PC-9 (cell line): ENCODE measurements at regions of chr7 and their contacts with region 1.

Region 1: DNA sequence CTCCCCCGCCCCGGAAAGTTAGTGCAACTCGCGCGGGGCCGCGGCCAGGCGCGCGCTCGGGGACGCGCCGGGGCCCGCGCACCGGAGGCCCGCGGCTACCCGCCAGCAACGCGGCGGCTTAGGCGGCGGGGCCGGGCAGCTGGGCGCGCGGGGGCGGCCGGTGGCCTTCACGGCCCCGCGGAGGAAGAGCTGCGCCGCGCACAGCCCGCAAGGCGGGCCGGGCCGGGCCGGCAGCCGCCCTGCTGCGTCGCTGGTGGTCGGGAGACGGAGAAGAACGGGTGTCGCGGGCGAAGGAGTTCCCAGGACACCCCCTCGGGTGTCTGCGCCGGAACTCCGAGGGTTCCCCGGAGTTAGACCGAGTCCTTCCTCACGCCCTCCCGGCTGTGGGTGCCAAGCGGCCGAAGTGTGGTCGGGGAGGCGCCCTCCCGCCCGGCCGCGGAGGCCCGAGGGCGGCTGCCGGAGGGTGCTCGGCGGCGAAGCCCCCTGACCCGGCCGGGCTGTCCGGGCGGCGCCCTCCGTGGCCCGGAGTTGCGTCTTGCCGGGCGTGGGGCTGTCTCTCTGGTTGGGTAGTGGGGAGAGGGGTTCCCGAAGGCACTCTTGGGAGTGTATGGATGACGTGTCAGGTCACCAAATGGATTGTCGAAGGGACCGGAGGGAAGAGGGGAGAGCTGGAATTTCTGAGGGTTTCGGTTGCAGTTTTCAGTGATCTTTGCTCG is 584 bp downstream of the ST7 start:
- DNase-seq: peak; percentile 63 to 65
- H3K4me3 ChIP-seq: peak overlapping the region; percentile 95
- H3K27ac ChIP-seq: peak overlapping the region; percentile 85
- H3K4me1 ChIP-seq: peaks cover 24% of the 10 kb centered on the region
- H3K27me3 ChIP-seq: no peaks in the 10 kb centered on the region
- CTCF ChIP-seq: no peak

Region 2: DNA sequence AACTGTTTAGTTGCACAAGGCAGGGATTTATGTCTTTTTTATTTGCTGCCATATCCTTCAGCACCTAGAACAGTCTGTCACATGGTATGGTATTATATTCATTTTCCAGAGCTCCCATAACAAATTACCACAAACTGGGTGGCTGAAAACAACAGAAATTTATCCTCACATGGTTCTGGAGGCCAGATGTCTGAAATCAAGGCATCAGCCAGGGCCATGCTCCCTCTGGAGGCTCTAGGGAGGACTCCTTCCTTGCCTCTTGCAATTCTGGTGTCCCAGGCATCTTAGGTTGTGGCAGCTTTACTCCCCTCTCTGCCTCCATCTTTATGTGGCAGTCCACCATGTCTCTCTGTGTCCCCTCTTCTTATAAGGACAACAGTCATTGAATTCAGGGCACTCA is 238.8 kb before region 1 on chr7:
- CTCF ChIA-PET with region 1: no interaction called
- POLR2A ChIA-PET with region 1: no interaction called
- intact Hi-C with region 1: loop called (anchors 5 kb)
- DNase-seq: no peak
- H3K4me3 ChIP-seq: no peak overlapping the region
- H3K27ac ChIP-seq: no peak overlapping the region
- H3K4me1 ChIP-seq: peaks cover 35% of the 10 kb centered on the region
- H3K27me3 ChIP-seq: no peaks in the 10 kb centered on the region
- CTCF ChIP-seq: no peak

Region 3: DNA sequence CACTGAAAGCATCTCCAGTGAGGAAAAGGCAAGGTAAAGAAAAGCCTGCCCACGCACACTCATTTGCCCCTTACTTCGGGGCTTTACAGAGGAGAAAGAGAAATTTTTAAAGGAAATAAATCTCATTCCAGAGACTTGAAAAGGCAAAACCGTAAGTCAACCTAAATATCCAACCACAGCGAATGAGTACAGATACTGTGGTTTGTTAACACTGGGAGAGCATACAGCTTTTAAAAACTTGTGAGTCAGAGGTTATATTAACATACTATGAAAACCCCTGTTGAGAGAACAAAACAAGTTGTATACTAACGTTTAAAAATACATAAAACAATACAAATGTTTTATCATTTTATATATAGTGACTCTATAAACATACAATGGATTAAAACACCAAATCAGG is 29.1 kb before region 1 on chr7:
- CTCF ChIA-PET with region 1: no interaction called
- POLR2A ChIA-PET with region 1: no interaction called
- intact Hi-C with region 1: no loop called
- DNase-seq: no peak
- H3K4me3 ChIP-seq: no peak overlapping the region
- H3K27ac ChIP-seq: no peak overlapping the region; the same call in 1 of the 2 replicates
- H3K4me1 ChIP-seq: no peaks in the 10 kb centered on the region
- H3K27me3 ChIP-seq: no peaks in the 10 kb centered on the region
- CTCF ChIP-seq: no peak

Region 4: DNA sequence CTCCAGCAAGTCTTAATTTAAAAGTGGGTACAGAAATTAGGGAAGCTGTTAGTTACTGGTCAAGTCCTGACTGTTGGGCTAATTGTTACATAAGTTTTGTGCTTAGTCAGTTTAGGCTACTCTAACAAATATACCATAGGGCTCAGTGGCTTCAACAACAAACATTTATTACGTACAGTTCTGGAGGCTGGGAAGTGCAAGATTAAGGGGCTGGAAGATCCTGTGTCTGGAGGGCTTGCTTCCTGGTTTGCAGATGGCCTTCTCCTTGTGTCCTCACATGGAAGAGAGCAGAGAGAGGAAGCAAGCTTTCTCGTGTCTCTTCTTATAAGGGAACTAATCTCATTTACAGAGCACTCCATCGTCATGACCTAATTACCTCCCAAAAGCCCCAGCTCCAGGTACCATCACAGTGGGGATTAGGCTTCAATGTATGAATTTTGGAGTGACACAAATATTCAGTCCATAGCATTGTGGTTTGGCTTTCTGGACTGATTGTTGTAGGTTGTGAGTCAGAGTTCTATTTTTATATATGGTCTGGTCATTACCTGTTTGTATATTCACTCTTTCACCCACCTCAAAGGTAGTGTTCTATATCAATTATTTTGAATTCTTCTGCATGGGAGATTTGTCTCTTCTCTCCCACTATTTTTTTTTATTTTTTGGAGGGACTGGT is 16.5 kb after region 1 on chr7:
- CTCF ChIA-PET with region 1: interaction called, 6 read pairs
- POLR2A ChIA-PET with region 1: interaction called, 17 read pairs
- intact Hi-C with region 1: no loop called
- DNase-seq: no peak
- H3K4me3 ChIP-seq: no peak overlapping the region
- H3K27ac ChIP-seq: no peak overlapping the region
- H3K4me1 ChIP-seq: peaks cover 28% of the 10 kb centered on the region
- H3K27me3 ChIP-seq: no peaks in the 10 kb centered on the region
- CTCF ChIP-seq: no peak